Endothelial cell of umbilical vein (primary cell): ENCODE measurements at regions of chr7 and their contacts with region 1.

Region 1: GRCh38 chr7:134766779-134767519 is 12.5 kb upstream of the CALD1 start:
- DNase-seq: no peak
- H3K4me3 ChIP-seq: no peak overlapping the region
- H3K27ac ChIP-seq: no peak overlapping the region
- H3K4me1 ChIP-seq: no peaks in the 10 kb centered on the region
- H3K27me3 ChIP-seq: no peaks in the 10 kb centered on the region
- CTCF ChIP-seq: no peak
- POLR2A ChIP-seq: no peak

Region 2: GRCh38 chr7:134750083-134751062 is 16.6 kb before region 1 on chr7:
- CTCF ChIA-PET with region 1: interaction called, 19 read pairs
- POLR2A ChIA-PET with region 1: no interaction called
- dilution Hi-C with region 1: no loop called
- intact Hi-C with region 1: no loop called
- DNase-seq: peak; percentile 51
- H3K4me3 ChIP-seq: no peak overlapping the region
- H3K27ac ChIP-seq: no peak overlapping the region
- H3K4me1 ChIP-seq: no peaks in the 10 kb centered on the region
- H3K27me3 ChIP-seq: no peaks in the 10 kb centered on the region
- CTCF ChIP-seq: peak; percentile 68 to 76
- POLR2A ChIP-seq: no peak